ENCODE measurements at regions of chr3 and their contacts with region 1.

Region 1: DNA sequence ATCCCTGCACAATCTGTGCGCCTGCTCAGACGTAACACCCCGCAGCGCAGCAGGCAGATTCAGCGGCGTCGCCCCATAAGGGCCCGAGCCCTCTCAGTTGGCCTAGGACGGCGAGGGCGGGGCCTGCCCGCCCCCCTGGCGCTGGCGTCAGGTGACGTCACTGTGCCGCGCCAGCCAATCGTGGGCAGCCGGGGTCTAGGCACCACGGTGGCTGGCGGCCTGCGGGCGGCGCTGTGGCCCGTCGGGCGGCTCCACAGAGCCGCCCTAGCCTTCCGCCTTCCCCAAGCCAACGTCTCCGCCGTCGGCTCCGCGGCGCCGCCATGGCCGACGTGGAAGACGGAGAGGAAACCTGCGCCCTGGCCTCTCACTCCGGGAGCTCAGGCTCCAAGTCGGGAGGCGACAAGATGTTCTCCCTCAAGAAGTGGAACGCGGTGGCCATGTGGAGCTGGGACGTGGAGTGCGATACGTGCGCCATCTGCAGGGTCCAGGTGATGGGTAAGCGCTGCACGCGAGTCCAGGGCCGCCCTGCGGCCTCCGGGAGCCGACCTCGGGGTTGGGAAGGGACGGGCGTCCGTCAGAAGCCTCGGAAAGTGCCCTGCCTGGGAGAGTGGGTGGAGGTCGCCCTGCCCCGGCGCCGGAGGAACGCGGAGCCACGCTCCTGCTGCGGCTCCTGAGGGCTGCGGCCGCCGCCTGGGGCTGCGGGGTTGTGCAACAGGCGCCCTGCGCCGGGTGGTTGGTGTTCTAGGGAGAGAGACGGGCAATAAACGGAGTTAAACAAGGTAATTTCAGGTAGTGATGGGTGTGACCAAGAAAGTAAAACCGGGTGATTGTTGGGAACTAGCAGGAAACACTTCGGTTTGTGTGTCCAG is at the start of gene RNF7:
- DNase-seq: peak; percentile 94 to 99 (median 97)
- ATAC-seq: peak; percentile 91
- H3K4me3 ChIP-seq: peak within 1 kb of the TSS; percentile 91
- H3K4me3 Mint-ChIP-seq: peak within 1 kb of the TSS; percentile 100
- H3K27ac ChIP-seq: peak within 1 kb of the TSS; percentile 81 to 86
- H3K27ac Mint-ChIP-seq: peak within 1 kb of the TSS; percentile 99
- H3K4me1 ChIP-seq: peaks cover 19% of the 10 kb centered on the region
- H3K4me1 Mint-ChIP-seq: peaks cover 47% of the 10 kb centered on the region
- H3K27me3 ChIP-seq: no peaks in the 10 kb centered on the region
- H3K27me3 Mint-ChIP-seq: no peaks in the 10 kb centered on the region
- CTCF ChIP-seq: peak; percentile 86
- total RNA-seq, gene RNF7: 60.7 to 65.7 TPM

Region 2: DNA sequence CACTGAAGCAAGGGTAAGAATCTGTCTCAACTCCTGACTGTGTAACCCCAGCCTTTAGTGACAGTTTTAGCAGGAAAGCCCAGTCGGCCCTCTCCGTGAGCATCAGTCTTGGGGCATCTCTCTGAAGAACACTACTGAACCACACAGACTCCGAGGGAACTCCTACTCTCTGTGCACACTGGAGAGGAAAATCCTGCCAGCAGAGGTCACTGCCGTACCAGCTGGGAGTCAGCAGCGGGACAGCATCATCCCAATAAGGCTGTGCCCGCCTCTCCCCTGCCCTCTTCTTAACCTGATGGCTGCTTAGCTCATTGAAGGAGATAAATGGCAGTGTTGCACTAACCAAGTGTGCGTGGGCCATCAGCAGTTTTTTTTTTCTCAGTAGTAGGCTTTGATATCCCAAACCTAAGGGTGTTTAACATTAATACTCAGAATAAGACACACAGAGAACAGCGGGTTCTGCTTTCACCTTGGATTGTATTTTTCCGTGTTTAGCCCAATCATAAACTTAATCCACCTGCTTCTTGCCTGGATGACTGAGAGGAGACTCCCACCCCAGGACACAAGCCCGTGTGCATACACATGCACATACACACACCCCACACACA is 278.1 kb before region 1 on chr3:
- CTCF ChIA-PET with region 1: no interaction called
- POLR2A ChIA-PET with region 1: no interaction called
- intact Hi-C with region 1: loop called in 1 of 2 experiments (anchors 1 kb)
- DNase-seq: peak; percentile 83 to 93 (median 88)
- ATAC-seq: peak; percentile 100
- H3K4me3 ChIP-seq: no peak overlapping the region
- H3K4me3 Mint-ChIP-seq: no peak overlapping the region
- H3K27ac ChIP-seq: no peak overlapping the region
- H3K27ac Mint-ChIP-seq: no peak overlapping the region
- H3K4me1 ChIP-seq: peaks cover 7% of the 10 kb centered on the region
- H3K4me1 Mint-ChIP-seq: peaks cover 7% of the 10 kb centered on the region
- H3K27me3 ChIP-seq: no peaks in the 10 kb centered on the region
- H3K27me3 Mint-ChIP-seq: no peaks in the 10 kb centered on the region
- CTCF ChIP-seq: peak; percentile 93

Region 3: GRCh38 chr3:141680620-141681389 is 57.5 kb before region 1 on chr3:
- CTCF ChIA-PET with region 1: no interaction called
- POLR2A ChIA-PET with region 1: no interaction called
- intact Hi-C with region 1: no loop called
- DNase-seq: peak in 1 of 14 experiments; percentile 28
- ATAC-seq: no peak
- H3K4me3 ChIP-seq: no peak overlapping the region
- H3K4me3 Mint-ChIP-seq: no peak overlapping the region
- H3K27ac ChIP-seq: no peak overlapping the region
- H3K27ac Mint-ChIP-seq: no peak overlapping the region
- H3K4me1 ChIP-seq: peaks cover 10% of the 10 kb centered on the region
- H3K4me1 Mint-ChIP-seq: peaks cover 21% of the 10 kb centered on the region
- H3K27me3 ChIP-seq: no peaks in the 10 kb centered on the region
- H3K27me3 Mint-ChIP-seq: no peaks in the 10 kb centered on the region
- CTCF ChIP-seq: no peak

Region 4: DNA sequence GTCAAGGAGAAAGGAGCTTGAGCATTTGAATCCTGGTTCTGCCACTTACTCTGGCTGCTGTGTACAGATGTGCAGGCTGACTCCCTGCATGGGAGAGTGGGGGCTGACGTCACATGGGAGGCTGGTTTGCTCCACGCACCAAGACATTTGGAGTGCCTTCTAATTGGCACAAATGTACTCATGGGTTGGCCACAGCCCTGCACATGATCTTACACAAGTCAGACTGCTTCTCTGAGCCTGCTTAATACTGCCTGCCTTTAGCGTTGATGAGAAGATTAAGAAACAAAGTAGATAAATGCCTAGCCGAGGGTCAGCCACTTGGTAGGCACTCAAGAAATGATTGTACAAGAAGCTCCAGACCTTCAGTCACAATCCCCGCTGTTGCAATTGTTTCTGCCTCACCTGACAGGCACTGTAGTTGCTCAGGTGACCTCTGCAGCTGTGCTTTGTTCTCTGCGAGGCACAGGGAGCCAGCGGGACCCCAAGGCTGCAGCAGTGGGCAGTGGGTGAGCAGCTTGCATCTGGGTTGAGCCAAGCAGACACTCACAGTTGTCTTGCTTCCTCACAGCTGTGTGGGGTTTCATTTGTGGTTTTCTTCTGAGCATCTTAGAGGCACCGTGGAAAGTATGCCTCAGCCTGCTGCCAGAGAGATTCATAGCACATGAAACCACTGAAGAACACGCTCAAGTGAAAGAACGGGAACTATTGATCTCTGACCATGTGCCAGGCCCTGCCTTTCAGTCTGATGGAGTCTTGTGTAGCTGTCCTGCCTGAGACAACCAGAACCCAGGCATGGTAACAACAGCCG is 58.0 kb after region 1 on chr3:
- CTCF ChIA-PET with region 1: no interaction called
- POLR2A ChIA-PET with region 1: interaction called, 69 read pairs
- intact Hi-C with region 1: loop called (anchors 2 to 10 kb)
- DNase-seq: peak; percentile 23 to 81 (median 48)
- ATAC-seq: peak; percentile 74
- H3K4me3 ChIP-seq: peak overlapping the region; percentile 53
- H3K4me3 Mint-ChIP-seq: peak overlapping the region; percentile 83
- H3K27ac ChIP-seq: peak overlapping the region; percentile 88 to 89
- H3K27ac Mint-ChIP-seq: peak overlapping the region; percentile 93
- H3K4me1 ChIP-seq: peaks cover 56% of the 10 kb centered on the region
- H3K4me1 Mint-ChIP-seq: peaks cover 63% of the 10 kb centered on the region
- H3K27me3 ChIP-seq: no peaks in the 10 kb centered on the region
- H3K27me3 Mint-ChIP-seq: no peaks in the 10 kb centered on the region
- CTCF ChIP-seq: no peak

Region 5: DNA sequence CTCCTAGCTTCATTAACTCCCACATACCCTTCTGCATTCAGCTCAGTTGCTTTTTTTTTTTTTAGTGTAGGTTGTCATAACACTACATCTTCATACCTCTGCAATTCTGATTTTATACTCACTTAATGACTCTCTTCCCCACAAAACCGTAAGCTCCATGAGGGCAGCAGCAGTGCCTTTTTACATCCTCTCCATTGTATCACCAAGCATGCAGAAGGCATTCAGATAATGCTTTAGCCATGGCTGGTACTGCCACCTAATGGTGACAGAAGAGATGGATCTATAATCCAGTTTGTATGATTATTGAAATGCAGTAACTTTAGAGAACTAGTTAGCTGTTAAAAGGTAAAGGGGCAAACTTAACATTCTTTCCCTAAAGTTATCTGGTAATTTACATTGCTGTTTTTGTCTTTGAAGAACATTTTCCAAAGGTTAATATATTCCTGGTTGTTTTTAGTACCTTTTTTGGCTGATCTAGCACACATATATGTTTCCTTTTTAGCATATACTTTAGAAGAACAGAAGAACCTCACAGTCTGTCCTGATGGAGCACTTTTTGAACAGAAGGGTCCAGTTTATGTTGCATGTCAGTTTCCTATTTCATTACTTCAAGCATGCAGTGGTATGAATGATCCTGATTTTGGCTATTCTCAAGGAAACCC is 175.0 kb after region 1 on chr3:
- CTCF ChIA-PET with region 1: interaction called, 16 read pairs
- POLR2A ChIA-PET with region 1: interaction called, 15 read pairs
- intact Hi-C with region 1: loop called (anchors 1 kb)
- DNase-seq: peak in 12 of 14 experiments; percentile 16 to 80 (median 34)
- ATAC-seq: peak; percentile 90
- H3K4me3 ChIP-seq: no peak overlapping the region
- H3K4me3 Mint-ChIP-seq: no peak overlapping the region
- H3K27ac ChIP-seq: no peak overlapping the region
- H3K27ac Mint-ChIP-seq: no peak overlapping the region
- H3K4me1 ChIP-seq: no peaks in the 10 kb centered on the region
- H3K4me1 Mint-ChIP-seq: peaks cover 4% of the 10 kb centered on the region
- H3K27me3 ChIP-seq: no peaks in the 10 kb centered on the region
- H3K27me3 Mint-ChIP-seq: no peaks in the 10 kb centered on the region
- CTCF ChIP-seq: peak; percentile 71

Region 6: DNA sequence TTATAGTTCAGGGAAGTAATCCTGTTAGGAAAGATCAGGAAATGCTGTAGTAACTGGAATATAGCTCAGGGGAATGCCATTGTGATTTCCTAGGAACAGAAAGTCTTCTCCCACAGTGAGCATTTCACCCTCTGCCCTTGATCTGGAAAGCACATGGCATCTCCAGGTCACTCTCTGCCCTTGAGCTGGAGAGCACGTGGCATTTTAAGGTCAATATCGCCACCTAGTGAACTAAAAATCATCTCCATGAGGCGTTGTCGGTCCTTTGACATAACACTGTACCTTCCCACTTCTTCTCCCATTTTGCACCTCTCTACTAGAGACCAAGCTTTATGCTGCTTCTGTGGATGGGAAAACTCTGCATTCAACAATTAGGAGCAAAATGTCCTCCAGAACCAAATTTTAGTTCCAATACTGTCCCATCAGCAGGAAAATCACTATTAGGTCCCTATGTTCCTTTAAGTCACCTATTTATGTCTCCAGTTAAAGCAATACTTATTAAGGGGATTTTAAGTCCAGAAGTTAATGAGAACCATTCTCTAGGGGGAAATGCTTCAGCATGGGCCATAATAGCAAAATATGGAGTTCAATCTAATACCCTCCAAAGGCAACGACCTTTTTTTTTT is 541.8 kb after region 1 on chr3:
- CTCF ChIA-PET with region 1: no interaction called
- POLR2A ChIA-PET with region 1: no interaction called
- intact Hi-C with region 1: loop called in 1 of 2 experiments (anchors 5 kb)
- DNase-seq: peak in 12 of 14 experiments; percentile 1 to 80 (median 18)
- ATAC-seq: peak; percentile 80
- H3K4me3 ChIP-seq: no peak overlapping the region
- H3K4me3 Mint-ChIP-seq: no peak overlapping the region
- H3K27ac ChIP-seq: no peak overlapping the region
- H3K27ac Mint-ChIP-seq: no peak overlapping the region
- H3K4me1 ChIP-seq: peaks cover 12% of the 10 kb centered on the region
- H3K4me1 Mint-ChIP-seq: no peaks in the 10 kb centered on the region
- H3K27me3 ChIP-seq: no peaks in the 10 kb centered on the region
- H3K27me3 Mint-ChIP-seq: no peaks in the 10 kb centered on the region
- CTCF ChIP-seq: peak; percentile 77

Measured in CD4-positive, alpha-beta T cell (primary cell).